Activated CD4-positive, alpha-beta T cell treated with anti-CD3 and anti-CD28 coated beads for 36 hours (primary cell): ENCODE measurements at regions of chr19 and their contacts with region 1.

Region 1: DNA sequence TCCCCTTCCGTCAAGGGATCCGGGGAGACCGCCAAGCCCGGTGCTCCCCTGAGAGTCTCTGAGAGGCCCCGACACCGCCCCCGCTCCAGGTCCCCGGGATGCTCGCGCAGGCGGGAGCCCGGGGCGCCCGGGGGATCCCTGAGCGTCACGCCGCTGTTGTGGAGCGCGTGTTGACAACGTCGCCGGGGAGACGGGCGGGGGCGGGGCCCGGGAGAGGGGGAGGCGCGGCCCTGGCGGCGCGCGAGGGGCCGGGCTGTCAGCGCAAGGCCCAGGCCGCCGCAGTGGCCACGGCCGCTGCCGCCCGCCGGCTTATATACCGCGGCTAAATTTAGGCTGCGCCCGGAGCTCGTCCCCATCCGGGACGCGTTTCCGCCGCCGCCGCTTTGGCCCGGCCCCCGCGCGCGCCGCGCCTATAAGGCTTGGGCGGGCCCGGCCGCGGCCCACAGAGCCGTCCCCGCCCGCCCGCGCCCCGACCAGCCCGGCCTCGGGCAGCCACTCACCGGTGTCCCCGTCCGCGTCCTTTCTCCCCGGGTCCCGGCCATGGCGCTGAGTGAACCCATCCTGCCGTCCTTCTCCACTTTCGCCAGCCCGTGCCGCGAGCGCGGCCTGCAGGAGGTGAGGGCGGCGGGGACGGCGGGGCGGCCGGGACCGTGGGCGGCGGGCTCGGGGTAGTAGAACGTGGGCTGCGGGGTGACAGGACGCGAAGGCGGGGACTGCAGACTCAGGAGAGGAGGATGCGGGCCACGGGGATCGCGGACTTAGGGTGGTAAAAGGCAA is at the start of gene KLF2:
- DNase-seq: peak; percentile 89
- ATAC-seq: peak; percentile 63
- H3K4me3 Mint-ChIP-seq: peak within 1 kb of the TSS; percentile 58
- H3K27ac Mint-ChIP-seq: no peak within 1 kb of the TSS
- H3K4me1 Mint-ChIP-seq: peaks cover 38% of the 10 kb centered on the region
- H3K27me3 Mint-ChIP-seq: peaks cover 29% of the 10 kb centered on the region
- total RNA-seq, gene KLF2: 0.57 to 0.90 TPM

Region 2: GRCh38 chr19:16283210-16284061 is 41.1 kb before region 1 on chr19:
- CTCF ChIA-PET with region 1: interaction called, 3 read pairs
- POLR2A ChIA-PET with region 1: no interaction called
- intact Hi-C with region 1: loop called (anchors 2 to 5 kb)
- DNase-seq: peak; percentile 91
- ATAC-seq: peak; percentile 87
- H3K4me3 Mint-ChIP-seq: peak overlapping the region; percentile 46
- H3K27ac Mint-ChIP-seq: peak overlapping the region; percentile 79
- H3K4me1 Mint-ChIP-seq: peaks cover 32% of the 10 kb centered on the region
- H3K27me3 Mint-ChIP-seq: peaks cover 18% of the 10 kb centered on the region

Region 3: GRCh38 chr19:16306728-16307402 is 17.7 kb before region 1 on chr19:
- CTCF ChIA-PET with region 1: no interaction called
- POLR2A ChIA-PET with region 1: no interaction called
- intact Hi-C with region 1: no loop called
- DNase-seq: no peak
- ATAC-seq: no peak
- H3K4me3 Mint-ChIP-seq: no peak overlapping the region
- H3K27ac Mint-ChIP-seq: no peak overlapping the region
- H3K4me1 Mint-ChIP-seq: no peaks in the 10 kb centered on the region
- H3K27me3 Mint-ChIP-seq: no peaks in the 10 kb centered on the region

Region 4: GRCh38 chr19:16371540-16371986 is 47.0 kb after region 1 on chr19:
- CTCF ChIA-PET with region 1: interaction called, 10 read pairs
- POLR2A ChIA-PET with region 1: interaction called, 5 read pairs
- intact Hi-C with region 1: loop called in 1 of 2 experiments (anchors 1 kb)
- DNase-seq: peak; percentile 92
- ATAC-seq: peak; percentile 82
- H3K4me3 Mint-ChIP-seq: peak overlapping the region; percentile 22
- H3K27ac Mint-ChIP-seq: peak overlapping the region; percentile 76
- H3K4me1 Mint-ChIP-seq: peaks cover 46% of the 10 kb centered on the region
- H3K27me3 Mint-ChIP-seq: peaks cover 14% of the 10 kb centered on the region

Region 5: DNA sequence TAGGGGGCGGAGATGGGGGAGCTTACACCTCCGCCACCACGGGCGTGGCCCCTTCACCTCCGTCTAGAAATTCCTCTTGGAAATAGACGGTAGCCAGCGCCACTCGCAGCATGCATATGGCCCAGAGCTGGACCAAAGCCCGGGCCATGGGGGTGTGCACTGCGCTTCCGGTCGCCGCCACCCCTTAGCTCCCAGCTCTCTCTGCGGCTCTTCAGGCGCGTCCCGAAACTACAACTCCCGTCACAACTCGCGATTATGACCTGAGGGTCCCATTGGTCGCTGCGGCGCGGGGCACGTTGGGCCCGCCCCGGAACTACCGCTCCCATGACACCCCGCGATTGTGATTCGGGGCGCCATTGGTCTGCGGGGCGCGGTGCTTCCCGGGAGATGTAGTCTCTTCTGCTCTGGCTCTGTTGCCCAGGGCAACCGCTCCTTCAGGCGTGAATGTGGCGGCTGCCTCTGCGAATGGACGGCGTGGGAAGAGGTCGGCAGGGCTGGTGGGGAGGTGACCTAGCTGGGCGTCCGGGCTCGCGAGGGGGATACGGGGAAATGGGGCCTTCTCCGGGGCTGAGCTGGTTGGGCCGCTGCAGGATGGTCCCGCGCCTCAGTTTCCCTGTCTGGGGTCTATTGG is 171.5 kb after region 1 on chr19 and contains the starts of genes C19orf44 and CALR3:
- CTCF ChIA-PET with region 1: no interaction called
- POLR2A ChIA-PET with region 1: no interaction called
- intact Hi-C with region 1: no loop called
- DNase-seq: peak; percentile 99
- ATAC-seq: peak; percentile 99
- H3K4me3 Mint-ChIP-seq: peak within 1 kb of the TSS; percentile 89
- H3K27ac Mint-ChIP-seq: peak within 1 kb of the TSS; percentile 79
- H3K4me1 Mint-ChIP-seq: peaks cover 13% of the 10 kb centered on the region
- H3K27me3 Mint-ChIP-seq: no peaks in the 10 kb centered on the region
- total RNA-seq, gene C19orf44: 2.9 to 4.0 TPM
- total RNA-seq, gene CALR3: not detected

Region 6: GRCh38 chr19:17752865-17753639 is 1428.5 kb after region 1 on chr19:
- CTCF ChIA-PET with region 1: no interaction called
- POLR2A ChIA-PET with region 1: interaction called, 14 read pairs
- intact Hi-C with region 1: no loop called
- DNase-seq: no peak
- ATAC-seq: no peak
- H3K4me3 Mint-ChIP-seq: no peak overlapping the region
- H3K27ac Mint-ChIP-seq: no peak overlapping the region
- H3K4me1 Mint-ChIP-seq: peaks cover 62% of the 10 kb centered on the region
- H3K27me3 Mint-ChIP-seq: no peaks in the 10 kb centered on the region

Region 7: GRCh38 chr19:17847538-17848366 is 1523.2 kb after region 1 on chr19 and contains the start of gene JAK3:
- CTCF ChIA-PET with region 1: no interaction called
- POLR2A ChIA-PET with region 1: no interaction called
- intact Hi-C with region 1: loop called in 1 of 2 experiments (anchors 5 kb)
- DNase-seq: peak; percentile 96
- ATAC-seq: peak; percentile 82
- H3K4me3 Mint-ChIP-seq: peak within 1 kb of the TSS; percentile 92
- H3K27ac Mint-ChIP-seq: peak within 1 kb of the TSS; percentile 98
- H3K4me1 Mint-ChIP-seq: peaks cover 69% of the 10 kb centered on the region
- H3K27me3 Mint-ChIP-seq: no peaks in the 10 kb centered on the region
- total RNA-seq, gene JAK3: 174 to 180 TPM